CD8-positive, alpha-beta T cell (primary cell): ENCODE measurements at regions of chr5 and their contacts with region 1.

Region 1: GRCh38 chr5:131305906-131306305 is 42.1 kb downstream of the CDC42SE2 start:
- DNase-seq: no peak
- ATAC-seq: peak; percentile 15
- H3K4me3 ChIP-seq: no peak overlapping the region
- H3K4me3 Mint-ChIP-seq: peak overlapping the region; percentile 33
- H3K27ac ChIP-seq: peak overlapping the region in 1 of 2 experiments; percentile 1
- H3K27ac Mint-ChIP-seq: peak overlapping the region; percentile 78
- H3K4me1 ChIP-seq: peaks cover 47% of the 10 kb centered on the region
- H3K4me1 Mint-ChIP-seq: peaks cover 65% of the 10 kb centered on the region
- H3K27me3 ChIP-seq: no peaks in the 10 kb centered on the region
- H3K27me3 Mint-ChIP-seq: no peaks in the 10 kb centered on the region
- CTCF ChIP-seq: no peak

Region 2: GRCh38 chr5:131289738-131290137 is 16.2 kb before region 1 on chr5:
- CTCF ChIA-PET with region 1: interaction called, 3 read pairs
- POLR2A ChIA-PET with region 1: no interaction called
- intact Hi-C with region 1: loop called in 1 of 2 experiments (anchors 2 kb)
- DNase-seq: peak in 2 of 9 experiments; percentile 34 to 57
- ATAC-seq: peak; percentile 52
- H3K4me3 ChIP-seq: peak overlapping the region; percentile 4 to 42
- H3K4me3 Mint-ChIP-seq: peak overlapping the region; percentile 76
- H3K27ac ChIP-seq: peak overlapping the region; percentile 21 to 79
- H3K27ac Mint-ChIP-seq: peak overlapping the region; percentile 91
- H3K4me1 ChIP-seq: peaks cover 87% of the 10 kb centered on the region
- H3K4me1 Mint-ChIP-seq: peaks cover 72% of the 10 kb centered on the region
- H3K27me3 ChIP-seq: no peaks in the 10 kb centered on the region
- H3K27me3 Mint-ChIP-seq: no peaks in the 10 kb centered on the region
- CTCF ChIP-seq: no peak